H1 (cell line): ENCODE measurements at regions of chr14 and their contacts with region 1.

Region 1: DNA sequence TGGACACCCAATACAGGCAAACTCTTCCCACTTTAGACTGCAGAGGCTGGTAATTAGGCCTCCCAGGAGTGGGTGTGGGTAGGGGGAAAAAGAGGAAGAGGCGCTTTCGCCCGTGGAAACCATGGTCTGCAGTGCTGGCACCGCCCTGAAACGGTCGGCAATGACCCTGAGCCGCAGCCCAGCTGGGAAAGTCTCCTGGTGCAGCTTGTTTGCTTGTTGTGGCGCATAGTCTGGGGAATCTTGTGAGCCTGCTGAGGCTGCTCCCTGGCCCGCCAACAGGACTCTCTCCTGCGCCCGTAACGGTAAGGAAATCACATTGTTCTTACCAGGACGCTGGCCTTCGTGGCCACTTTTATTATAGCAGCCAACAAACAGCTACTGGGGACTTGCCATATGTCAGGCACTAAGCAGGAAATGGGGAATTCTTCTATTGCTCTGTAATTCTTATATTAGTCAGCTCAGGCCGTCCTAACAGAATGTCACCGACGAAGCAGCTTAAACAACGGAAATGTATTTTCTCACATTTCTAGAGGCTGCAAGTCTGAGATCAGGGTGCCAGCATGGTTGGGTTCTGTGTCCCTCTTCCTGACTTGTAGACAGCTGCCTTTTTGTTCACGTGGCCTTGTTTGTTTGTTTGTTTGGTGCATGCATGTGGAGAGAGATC is 52.5 kb upstream of the RIN3 start:
- DNase-seq: no peak
- H3K4me3 ChIP-seq: no peak overlapping the region
- H3K27ac ChIP-seq: no peak overlapping the region
- H3K4me1 ChIP-seq: peaks cover 0 to 1% (median 0%) of the 10 kb centered on the region in 4 experiments; a peak in 4 of 7 replicates
- H3K27me3 ChIP-seq: no peaks in the 10 kb centered on the region
- CTCF ChIP-seq: no peak
- EP300 ChIP-seq: no peak
- POLR2A ChIP-seq: no peak
- RAD21 ChIP-seq: no peak

Region 2: DNA sequence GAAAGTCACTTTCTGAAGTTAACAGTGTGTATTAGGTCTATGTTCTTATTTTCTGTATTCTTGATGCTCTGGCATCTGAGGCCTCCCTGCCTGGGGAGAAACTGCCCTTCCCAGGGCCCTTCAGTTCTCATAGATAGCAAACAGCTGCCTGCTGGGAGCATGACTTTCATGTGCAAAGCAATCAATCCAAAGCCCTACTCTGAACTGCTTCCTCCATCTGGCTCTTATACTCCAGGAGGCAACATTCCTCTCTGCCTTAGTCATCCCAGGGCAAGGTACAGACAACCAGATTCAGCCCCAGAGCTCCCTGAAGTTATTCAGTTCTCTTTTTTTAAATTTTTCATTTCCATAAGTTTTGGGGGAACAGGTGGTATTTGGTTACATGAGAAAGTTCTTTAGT is 10.9 kb after region 1 on chr14:
- CTCF ChIA-PET with region 1: interaction called, 21 read pairs
- POLR2A ChIA-PET with region 1: no interaction called
- DNase-seq: peak; percentile 47 to 51
- H3K4me3 ChIP-seq: no peak overlapping the region
- H3K27ac ChIP-seq: no peak overlapping the region; the same call in 1 of the 2 replicates
- H3K4me1 ChIP-seq: peaks cover 5 to 14% (median 12%) of the 10 kb centered on the region in 4 experiments; a peak in 6 of 7 replicates
- H3K27me3 ChIP-seq: no peaks in the 10 kb centered on the region
- CTCF ChIP-seq: no peak
- EP300 ChIP-seq: peak in 1 of 2 experiments; percentile 15; a peak in 1 of 3 replicates
- POLR2A ChIP-seq: no peak
- RAD21 ChIP-seq: no peak

Region 3: GRCh38 chr14:92481386-92481785 is 20.3 kb after region 1 on chr14:
- CTCF ChIA-PET with region 1: interaction called, 11 read pairs
- POLR2A ChIA-PET with region 1: no interaction called
- DNase-seq: peak in 1 of 2 experiments; percentile 20
- H3K4me3 ChIP-seq: no peak overlapping the region
- H3K27ac ChIP-seq: no peak overlapping the region
- H3K4me1 ChIP-seq: no peaks in the 10 kb centered on the region
- H3K27me3 ChIP-seq: 0 out of 7 replicates have a peak, but pooled peaks cover 0 to under 1% (median 0%) of the 10 kb centered on the region in 4 experiments
- CTCF ChIP-seq: peak; percentile 4 to 21 (median 19); a peak in 3 of 4 replicates
- EP300 ChIP-seq: no peak
- POLR2A ChIP-seq: no peak
- RAD21 ChIP-seq: peak in 1 of 2 experiments; percentile 18; a peak in 1 of 4 replicates